PC-9 (cell line): ENCODE measurements at regions of chr1 and their contacts with region 1.

Region 1: GRCh38 chr1:43763497-43763973 is 56.2 kb downstream of the ST3GAL3 start:
- DNase-seq: peak; percentile 77 to 80
- H3K4me3 ChIP-seq: no peak overlapping the region
- H3K27ac ChIP-seq: peak overlapping the region; percentile 27
- H3K4me1 ChIP-seq: peaks cover 8% of the 10 kb centered on the region
- H3K27me3 ChIP-seq: no peaks in the 10 kb centered on the region
- CTCF ChIP-seq: peak; percentile 95

Region 2: GRCh38 chr1:43227143-43227764 is 536.3 kb before region 1 on chr1:
- CTCF ChIA-PET with region 1: no interaction called
- POLR2A ChIA-PET with region 1: no interaction called
- intact Hi-C with region 1: loop called (anchors 5 kb)
- DNase-seq: peak; percentile 73 to 88
- H3K4me3 ChIP-seq: no peak overlapping the region
- H3K27ac ChIP-seq: no peak overlapping the region
- H3K4me1 ChIP-seq: peaks cover 16% of the 10 kb centered on the region
- H3K27me3 ChIP-seq: no peaks in the 10 kb centered on the region
- CTCF ChIP-seq: peak; percentile 97

Region 3: GRCh38 chr1:43499886-43500285 is 263.6 kb before region 1 on chr1:
- CTCF ChIA-PET with region 1: no interaction called
- POLR2A ChIA-PET with region 1: no interaction called
- intact Hi-C with region 1: no loop called
- DNase-seq: no peak
- H3K4me3 ChIP-seq: no peak overlapping the region
- H3K27ac ChIP-seq: no peak overlapping the region
- H3K4me1 ChIP-seq: no peaks in the 10 kb centered on the region
- H3K27me3 ChIP-seq: no peaks in the 10 kb centered on the region
- CTCF ChIP-seq: no peak

Region 4: GRCh38 chr1:43783671-43784205 is 20.2 kb after region 1 on chr1:
- CTCF ChIA-PET with region 1: interaction called, 10 read pairs
- POLR2A ChIA-PET with region 1: no interaction called
- intact Hi-C with region 1: loop called (anchors 1 kb)
- DNase-seq: peak; percentile 93 to 98
- H3K4me3 ChIP-seq: no peak overlapping the region; the same call in 1 of the 2 replicates
- H3K27ac ChIP-seq: peak overlapping the region; percentile 99
- H3K4me1 ChIP-seq: peaks cover 48% of the 10 kb centered on the region
- H3K27me3 ChIP-seq: no peaks in the 10 kb centered on the region
- CTCF ChIP-seq: no peak

Region 5: DNA sequence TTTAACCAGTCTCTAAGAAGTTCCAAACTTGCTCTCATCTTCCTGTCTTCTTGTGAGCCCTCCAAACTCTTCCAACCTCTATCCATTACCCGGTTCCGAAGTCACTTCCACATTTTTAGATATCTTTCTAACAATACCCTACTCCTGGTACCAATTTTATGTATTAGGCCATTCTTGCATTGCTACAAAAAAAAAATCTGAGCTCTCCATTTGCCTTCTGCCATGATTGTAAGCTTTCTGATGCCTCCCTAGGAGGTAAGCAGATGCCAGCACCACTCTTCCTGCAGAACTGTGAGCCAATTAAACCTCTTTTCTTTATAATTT is 78.6 kb after region 1 on chr1:
- CTCF ChIA-PET with region 1: no interaction called
- POLR2A ChIA-PET with region 1: no interaction called
- intact Hi-C with region 1: no loop called
- DNase-seq: no peak
- H3K4me3 ChIP-seq: no peak overlapping the region
- H3K27ac ChIP-seq: no peak overlapping the region
- H3K4me1 ChIP-seq: peaks cover 8% of the 10 kb centered on the region
- H3K27me3 ChIP-seq: no peaks in the 10 kb centered on the region
- CTCF ChIP-seq: no peak

Region 6: GRCh38 chr1:43853161-43853921 is 89.8 kb after region 1 on chr1:
- CTCF ChIA-PET with region 1: interaction called, 11 read pairs
- POLR2A ChIA-PET with region 1: interaction called, 5 read pairs
- intact Hi-C with region 1: loop called (anchors 1 kb)
- DNase-seq: peak; percentile 79 to 83
- H3K4me3 ChIP-seq: no peak overlapping the region
- H3K27ac ChIP-seq: peak overlapping the region; percentile 54
- H3K4me1 ChIP-seq: peaks cover 31% of the 10 kb centered on the region
- H3K27me3 ChIP-seq: no peaks in the 10 kb centered on the region
- CTCF ChIP-seq: no peak

Region 7: DNA sequence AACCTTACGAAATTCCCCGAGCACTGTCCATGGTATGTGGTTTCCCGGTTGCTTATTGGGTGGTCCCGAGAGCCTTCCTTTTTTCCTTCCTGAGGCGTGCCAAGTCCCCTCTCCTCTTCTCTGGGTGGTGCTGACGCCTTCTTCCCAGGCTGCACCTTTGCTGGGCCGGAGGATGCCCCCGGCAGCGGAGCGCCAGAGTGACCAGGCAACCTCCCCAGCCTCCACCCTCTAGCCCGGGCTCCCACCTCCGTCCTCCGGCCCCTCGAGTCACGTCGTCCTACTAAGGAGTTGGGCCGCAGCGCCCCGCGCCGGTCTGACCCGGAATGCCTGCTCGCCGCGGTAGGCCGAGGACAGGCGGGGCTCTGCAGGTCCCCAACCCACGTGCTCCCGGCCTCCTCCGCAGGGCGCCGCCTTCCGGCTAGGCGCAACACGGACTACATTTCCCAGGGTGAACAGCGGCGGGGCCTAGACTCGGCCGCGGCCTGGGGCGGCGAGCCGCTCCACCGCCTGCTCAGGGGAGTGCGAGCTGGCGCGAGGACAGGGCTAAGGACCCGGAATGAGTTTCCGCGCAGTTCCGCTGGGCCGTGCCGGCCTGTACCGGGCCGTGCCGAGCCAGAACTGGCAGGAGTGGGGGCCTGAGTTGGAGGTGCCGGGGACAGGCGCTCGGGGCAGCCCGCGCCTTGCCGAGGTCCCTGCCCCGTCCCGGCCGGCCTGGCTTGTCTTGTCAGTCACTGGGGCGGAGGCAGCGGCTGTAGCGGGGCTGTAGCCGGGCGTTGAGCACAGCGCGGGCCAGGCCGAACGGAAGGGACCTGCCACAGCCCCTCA is 182.9 kb after region 1 on chr1 and contains the start of gene IPO13:
- CTCF ChIA-PET with region 1: interaction called, 13 read pairs
- POLR2A ChIA-PET with region 1: interaction called, 8 read pairs
- intact Hi-C with region 1: loop called (anchors 1 kb)
- DNase-seq: peak; percentile 86 to 98
- H3K4me3 ChIP-seq: peak within 1 kb of the TSS; percentile 74
- H3K27ac ChIP-seq: peak within 1 kb of the TSS; percentile 75
- H3K4me1 ChIP-seq: peaks cover 26% of the 10 kb centered on the region
- H3K27me3 ChIP-seq: no peaks in the 10 kb centered on the region
- CTCF ChIP-seq: peak; percentile 79
- total RNA-seq, gene IPO13: 25.0 and 27.2 TPM in 2 replicates

Region 8: GRCh38 chr1:44036409-44037139 is 273.0 kb after region 1 on chr1:
- CTCF ChIA-PET with region 1: interaction called, 4 read pairs
- POLR2A ChIA-PET with region 1: no interaction called
- intact Hi-C with region 1: loop called (anchors 5 kb)
- DNase-seq: peak; percentile 59 to 77
- H3K4me3 ChIP-seq: no peak overlapping the region
- H3K27ac ChIP-seq: peak overlapping the region; percentile 20; the same call in 1 of the 2 replicates
- H3K4me1 ChIP-seq: peaks cover 27% of the 10 kb centered on the region
- H3K27me3 ChIP-seq: no peaks in the 10 kb centered on the region
- CTCF ChIP-seq: peak; percentile 89